ENCODE measurements at regions of chr7 and their contacts with region 1.

Region 1: GRCh38 chr7:34133983-34134782 is 228.8 kb downstream of the BMPER start:
- DNase-seq: peak; percentile 64
- H3K4me3 ChIP-seq: peak overlapping the region in 1 of 2 experiments; percentile 34; a peak in 2 of 4 replicates
- H3K27ac ChIP-seq: peak overlapping the region; percentile 39 to 98; a peak in 3 of 4 replicates
- H3K4me1 ChIP-seq: peaks cover 6 to 37% of the 10 kb centered on the region in 2 experiments; a peak in 3 of 4 replicates
- H3K27me3 ChIP-seq: no peaks in the 10 kb centered on the region
- CTCF ChIP-seq: peak; percentile 100
- EP300 ChIP-seq: no peak
- RAD21 ChIP-seq: peak; percentile 90

Region 2: GRCh38 chr7:34070511-34071323 is 63.5 kb before region 1 on chr7:
- CTCF ChIA-PET with region 1: no interaction called
- POLR2A ChIA-PET with region 1: no interaction called
- DNase-seq: no peak
- H3K4me3 ChIP-seq: no peak overlapping the region
- H3K27ac ChIP-seq: peak overlapping the region; percentile 43 to 55; a peak in 2 of 4 replicates
- H3K4me1 ChIP-seq: peaks cover 4 to 37% of the 10 kb centered on the region in 2 experiments; a peak in 3 of 4 replicates
- H3K27me3 ChIP-seq: no peaks in the 10 kb centered on the region
- CTCF ChIP-seq: no peak
- EP300 ChIP-seq: 0 out of 4 replicates have a peak, but pooled peaks have one; percentile 28 to 33
- RAD21 ChIP-seq: no peak

Region 3: DNA sequence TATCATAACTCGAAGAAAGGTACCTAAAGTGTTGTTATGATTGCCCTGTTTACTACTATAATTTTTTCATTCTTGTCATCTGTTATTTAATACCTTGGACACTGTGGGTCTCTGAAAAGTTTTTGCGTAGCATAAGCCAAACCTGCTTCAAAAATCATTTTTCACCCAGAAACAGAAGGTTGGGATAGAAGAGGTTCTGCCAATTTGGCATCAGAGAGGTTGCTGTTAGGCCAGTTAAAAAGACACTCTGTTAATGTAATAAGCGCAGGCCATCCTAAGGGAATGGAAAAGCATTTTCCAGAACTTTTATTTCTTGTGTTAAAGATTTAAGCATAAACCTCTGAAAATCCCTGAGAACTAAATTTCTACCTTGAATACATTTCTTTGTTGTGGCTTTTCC is 16.6 kb before region 1 on chr7:
- CTCF ChIA-PET with region 1: interaction called, 17 read pairs
- POLR2A ChIA-PET with region 1: no interaction called
- DNase-seq: no peak
- H3K4me3 ChIP-seq: no peak overlapping the region
- H3K27ac ChIP-seq: no peak overlapping the region
- H3K4me1 ChIP-seq: no peaks in the 10 kb centered on the region
- H3K27me3 ChIP-seq: no peaks in the 10 kb centered on the region
- CTCF ChIP-seq: no peak
- EP300 ChIP-seq: no peak
- RAD21 ChIP-seq: no peak

Region 4: GRCh38 chr7:34123316-34123715 is 10.9 kb before region 1 on chr7:
- CTCF ChIA-PET with region 1: interaction called, 17 read pairs
- POLR2A ChIA-PET with region 1: no interaction called
- DNase-seq: no peak
- H3K4me3 ChIP-seq: no peak overlapping the region
- H3K27ac ChIP-seq: no peak overlapping the region
- H3K4me1 ChIP-seq: peaks cover 0 to 5% of the 10 kb centered on the region in 2 experiments; a peak in 1 of 4 replicates
- H3K27me3 ChIP-seq: no peaks in the 10 kb centered on the region
- CTCF ChIP-seq: no peak
- EP300 ChIP-seq: no peak
- RAD21 ChIP-seq: no peak

Region 5: DNA sequence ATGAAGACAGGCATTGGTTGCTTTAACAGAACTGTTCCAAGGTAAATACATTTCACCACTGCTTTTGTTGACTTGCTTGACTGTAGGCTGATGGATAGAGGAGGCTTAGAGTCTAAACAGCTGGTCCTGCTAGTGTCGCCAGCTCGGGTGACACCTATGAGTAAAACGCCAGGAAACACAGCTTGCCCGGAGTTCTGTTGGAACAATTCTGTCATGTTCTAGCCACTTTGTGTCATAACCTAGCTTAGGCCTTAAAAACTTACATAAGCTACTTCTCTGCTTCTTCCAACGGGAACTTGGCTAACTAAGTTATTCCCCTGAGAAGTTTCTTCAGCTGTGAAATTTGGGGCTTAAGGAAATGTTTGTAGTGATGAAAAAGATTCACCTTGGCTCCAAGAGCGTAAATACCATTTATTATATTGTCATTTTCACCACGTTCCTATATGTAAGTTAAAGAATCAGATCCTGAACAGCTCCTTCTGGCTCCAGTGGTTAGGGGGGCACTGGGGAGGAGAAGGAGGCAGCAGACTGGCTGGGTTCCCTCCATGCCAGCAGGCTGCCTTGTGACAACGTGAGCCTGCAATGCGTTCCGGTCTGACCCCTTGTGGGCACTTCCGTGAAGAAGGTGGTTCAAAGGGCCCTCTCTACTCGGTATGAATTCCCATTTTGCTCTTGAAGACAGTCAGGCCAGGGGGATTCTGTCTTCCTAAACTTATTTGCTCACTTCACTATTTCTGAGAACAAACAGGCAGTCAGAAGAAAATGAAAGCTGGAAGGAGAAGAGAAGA is 24.4 kb after region 1 on chr7:
- CTCF ChIA-PET with region 1: interaction called, 17 read pairs
- POLR2A ChIA-PET with region 1: no interaction called
- DNase-seq: peak; percentile 30
- H3K4me3 ChIP-seq: no peak overlapping the region
- H3K27ac ChIP-seq: peak overlapping the region in 1 of 2 experiments; percentile 69; a peak in 1 of 4 replicates
- H3K4me1 ChIP-seq: peaks cover 0 to 53% of the 10 kb centered on the region in 2 experiments; a peak in 2 of 4 replicates
- H3K27me3 ChIP-seq: no peaks in the 10 kb centered on the region
- CTCF ChIP-seq: peak; percentile 56
- EP300 ChIP-seq: no peak
- RAD21 ChIP-seq: peak; percentile 44; the same call in 1 of the 2 replicates

Region 6: GRCh38 chr7:34165466-34165865 is 31.3 kb after region 1 on chr7:
- CTCF ChIA-PET with region 1: interaction called, 17 read pairs
- POLR2A ChIA-PET with region 1: no interaction called
- DNase-seq: no peak
- H3K4me3 ChIP-seq: no peak overlapping the region
- H3K27ac ChIP-seq: no peak overlapping the region
- H3K4me1 ChIP-seq: peaks cover 0 to 9% of the 10 kb centered on the region in 2 experiments; a peak in 1 of 4 replicates
- H3K27me3 ChIP-seq: no peaks in the 10 kb centered on the region
- CTCF ChIP-seq: no peak
- EP300 ChIP-seq: no peak
- RAD21 ChIP-seq: no peak

Measured in SK-N-SH (cell line).